B cell (primary cell): ENCODE measurements at regions of chr16 and their contacts with region 1.

Region 1: DNA sequence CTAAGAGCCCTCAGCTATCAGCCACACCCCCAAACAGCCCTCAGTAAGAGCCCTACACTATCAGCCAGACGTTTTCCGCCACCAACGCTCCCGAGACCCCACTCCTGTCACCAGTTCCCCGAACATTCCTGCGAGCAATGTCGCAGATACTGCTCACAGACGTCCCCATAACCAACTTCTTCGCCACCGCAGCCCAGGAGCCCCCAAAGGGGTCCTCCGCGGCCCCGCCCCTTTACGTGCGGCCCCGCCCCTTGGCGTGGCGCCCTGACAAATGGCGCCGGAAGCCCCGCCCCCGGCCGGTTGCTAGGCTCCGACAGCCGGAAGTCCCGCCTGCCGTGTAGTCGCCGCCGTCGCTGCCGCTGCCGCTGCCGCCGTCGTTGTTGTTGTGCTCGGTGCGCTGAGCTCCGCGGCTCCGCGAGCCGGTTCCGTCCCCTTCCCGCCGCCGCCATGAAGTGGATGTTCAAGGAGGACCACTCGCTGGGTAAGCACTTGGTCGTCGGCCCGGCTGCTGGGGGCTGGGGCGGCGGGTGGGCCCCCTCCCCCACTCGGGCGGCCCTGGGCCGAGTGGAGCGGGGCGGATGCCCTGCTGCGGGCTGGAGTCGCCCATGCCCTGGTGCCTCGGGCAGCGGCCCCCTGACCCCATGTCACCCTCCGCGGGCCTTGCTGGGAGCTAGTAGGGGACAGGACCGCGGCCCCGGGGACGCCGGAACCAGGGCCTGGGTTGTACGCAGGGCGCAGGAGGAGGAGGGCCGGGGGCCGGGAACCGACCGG is at the start of gene GABARAPL2:
- DNase-seq: peak; percentile 97
- ATAC-seq: peak; percentile 70
- H3K4me3 ChIP-seq: peak within 1 kb of the TSS; percentile 75 to 96 (median 95)
- H3K4me3 Mint-ChIP-seq: peak within 1 kb of the TSS; percentile 100
- H3K27ac ChIP-seq: peak within 1 kb of the TSS; percentile 96 to 99
- H3K27ac Mint-ChIP-seq: peak within 1 kb of the TSS; percentile 97
- H3K4me1 ChIP-seq: peaks cover 44 to 61% of the 10 kb centered on the region in 2 donors
- H3K4me1 Mint-ChIP-seq: peaks cover 53% of the 10 kb centered on the region
- H3K27me3 ChIP-seq: no peaks in the 10 kb centered on the region
- H3K27me3 Mint-ChIP-seq: no peaks in the 10 kb centered on the region
- CTCF ChIP-seq: no peak
- total RNA-seq, gene GABARAPL2: 84.8 and 84.9 TPM in 2 replicates

Region 2: DNA sequence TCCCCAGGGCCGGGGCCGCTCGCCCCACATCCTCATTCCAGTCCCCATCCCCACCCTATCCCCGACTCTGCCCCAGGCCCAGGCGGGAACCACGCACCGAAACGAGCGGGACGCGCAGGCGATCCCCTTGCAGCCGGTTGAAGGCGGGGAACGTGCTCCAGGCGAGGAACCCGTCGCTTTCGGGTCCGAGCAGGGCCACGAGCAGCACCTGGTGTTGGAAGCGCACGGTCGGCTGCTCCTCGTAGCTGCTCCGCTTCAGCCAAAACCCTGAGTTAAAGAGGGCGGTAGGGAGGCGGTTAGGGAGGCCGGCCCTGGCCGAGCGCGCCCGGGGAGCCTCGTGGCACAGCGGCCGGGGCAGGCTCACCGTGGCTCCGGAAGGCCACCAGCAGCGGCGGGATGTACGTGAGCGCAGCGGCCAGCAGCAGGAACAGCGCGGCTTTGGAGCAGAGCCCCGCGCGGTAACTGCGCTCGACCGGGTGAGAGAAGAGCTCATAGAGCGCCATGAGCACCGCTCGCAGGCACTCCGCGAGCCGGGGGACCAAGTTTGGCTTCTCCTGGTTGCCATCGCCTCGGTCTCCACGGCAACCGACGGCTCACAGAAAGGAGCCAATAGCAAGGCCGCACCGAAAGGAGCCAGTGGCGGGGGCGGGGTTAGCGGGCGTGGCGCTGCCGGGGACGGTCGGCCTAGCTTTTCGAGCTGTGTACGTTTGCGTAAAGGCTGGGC is 10.4 kb before region 1 on chr16 and contains the start of gene TMEM231:
- CTCF ChIA-PET with region 1: interaction called, 9 read pairs
- POLR2A ChIA-PET with region 1: interaction called, 16 read pairs
- intact Hi-C with region 1: loop called (anchors 1 kb)
- DNase-seq: peak; percentile 96
- ATAC-seq: peak; percentile 93
- H3K4me3 ChIP-seq: peak within 1 kb of the TSS; percentile 34 to 78 (median 71)
- H3K4me3 Mint-ChIP-seq: peak within 1 kb of the TSS; percentile 97
- H3K27ac ChIP-seq: peak within 1 kb of the TSS; percentile 9 to 76
- H3K27ac Mint-ChIP-seq: peak within 1 kb of the TSS; percentile 88
- H3K4me1 ChIP-seq: peaks cover 9 to 16% of the 10 kb centered on the region in 2 donors
- H3K4me1 Mint-ChIP-seq: peaks cover 10% of the 10 kb centered on the region
- H3K27me3 ChIP-seq: peaks cover 0 to 8% (median 0%) of the 10 kb centered on the region in 4 experiments
- H3K27me3 Mint-ChIP-seq: no peaks in the 10 kb centered on the region
- CTCF ChIP-seq: peak; percentile 17
- total RNA-seq, gene TMEM231: 4.7 and 6.0 TPM in 2 replicates

Region 3: GRCh38 chr16:75584108-75584507 is 17.9 kb after region 1 on chr16:
- CTCF ChIA-PET with region 1: interaction called, 3 read pairs
- POLR2A ChIA-PET with region 1: no interaction called
- intact Hi-C with region 1: loop called (anchors 2 kb)
- DNase-seq: peak; percentile 60
- ATAC-seq: peak; percentile 87
- H3K4me3 ChIP-seq: peak overlapping the region in 1 of 5 experiments; percentile 29
- H3K4me3 Mint-ChIP-seq: peak overlapping the region; percentile 33
- H3K27ac ChIP-seq: peak overlapping the region; percentile 34 to 70
- H3K27ac Mint-ChIP-seq: peak overlapping the region; percentile 65
- H3K4me1 ChIP-seq: peaks cover 30 to 54% of the 10 kb centered on the region in 2 donors
- H3K4me1 Mint-ChIP-seq: peaks cover 48% of the 10 kb centered on the region
- H3K27me3 ChIP-seq: no peaks in the 10 kb centered on the region
- H3K27me3 Mint-ChIP-seq: no peaks in the 10 kb centered on the region
- CTCF ChIP-seq: no peak

Region 4: GRCh38 chr16:75632857-75633256 is 66.6 kb after region 1 on chr16:
- CTCF ChIA-PET with region 1: no interaction called
- POLR2A ChIA-PET with region 1: no interaction called
- intact Hi-C with region 1: no loop called
- DNase-seq: no peak
- ATAC-seq: no peak
- H3K4me3 ChIP-seq: no peak overlapping the region
- H3K4me3 Mint-ChIP-seq: no peak overlapping the region
- H3K27ac ChIP-seq: no peak overlapping the region
- H3K27ac Mint-ChIP-seq: no peak overlapping the region
- H3K4me1 ChIP-seq: no peaks in the 10 kb centered on the region
- H3K4me1 Mint-ChIP-seq: no peaks in the 10 kb centered on the region
- H3K27me3 ChIP-seq: no peaks in the 10 kb centered on the region
- H3K27me3 Mint-ChIP-seq: no peaks in the 10 kb centered on the region
- CTCF ChIP-seq: no peak

Region 5: DNA sequence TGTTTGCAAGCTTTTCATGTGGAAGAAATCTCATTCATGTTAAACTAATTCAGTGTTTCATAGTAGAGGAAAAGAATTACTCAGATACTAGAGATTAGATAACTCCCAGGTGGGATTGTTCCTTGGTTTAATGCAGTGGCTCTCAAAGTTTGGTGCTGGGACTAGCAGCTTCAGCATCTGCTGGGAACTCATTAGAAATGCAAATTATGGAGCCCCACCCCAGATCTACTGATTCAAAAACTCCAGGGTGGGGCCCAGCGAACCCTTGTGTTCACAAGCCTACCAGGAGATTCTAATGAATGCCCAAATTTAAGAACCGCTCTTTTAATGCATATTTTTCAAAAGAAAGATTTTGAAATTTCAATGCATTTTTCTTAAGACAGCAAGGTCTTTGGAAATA is 457.6 kb after region 1 on chr16:
- CTCF ChIA-PET with region 1: no interaction called
- POLR2A ChIA-PET with region 1: no interaction called
- intact Hi-C with region 1: no loop called
- DNase-seq: no peak
- ATAC-seq: no peak
- H3K4me3 ChIP-seq: no peak overlapping the region
- H3K4me3 Mint-ChIP-seq: no peak overlapping the region
- H3K27ac ChIP-seq: no peak overlapping the region
- H3K27ac Mint-ChIP-seq: no peak overlapping the region
- H3K4me1 ChIP-seq: no peaks in the 10 kb centered on the region
- H3K4me1 Mint-ChIP-seq: no peaks in the 10 kb centered on the region
- H3K27me3 ChIP-seq: no peaks in the 10 kb centered on the region
- H3K27me3 Mint-ChIP-seq: no peaks in the 10 kb centered on the region
- CTCF ChIP-seq: no peak